ENCODE measurements at regions of chr3 and their contacts with region 1.

Region 1: DNA sequence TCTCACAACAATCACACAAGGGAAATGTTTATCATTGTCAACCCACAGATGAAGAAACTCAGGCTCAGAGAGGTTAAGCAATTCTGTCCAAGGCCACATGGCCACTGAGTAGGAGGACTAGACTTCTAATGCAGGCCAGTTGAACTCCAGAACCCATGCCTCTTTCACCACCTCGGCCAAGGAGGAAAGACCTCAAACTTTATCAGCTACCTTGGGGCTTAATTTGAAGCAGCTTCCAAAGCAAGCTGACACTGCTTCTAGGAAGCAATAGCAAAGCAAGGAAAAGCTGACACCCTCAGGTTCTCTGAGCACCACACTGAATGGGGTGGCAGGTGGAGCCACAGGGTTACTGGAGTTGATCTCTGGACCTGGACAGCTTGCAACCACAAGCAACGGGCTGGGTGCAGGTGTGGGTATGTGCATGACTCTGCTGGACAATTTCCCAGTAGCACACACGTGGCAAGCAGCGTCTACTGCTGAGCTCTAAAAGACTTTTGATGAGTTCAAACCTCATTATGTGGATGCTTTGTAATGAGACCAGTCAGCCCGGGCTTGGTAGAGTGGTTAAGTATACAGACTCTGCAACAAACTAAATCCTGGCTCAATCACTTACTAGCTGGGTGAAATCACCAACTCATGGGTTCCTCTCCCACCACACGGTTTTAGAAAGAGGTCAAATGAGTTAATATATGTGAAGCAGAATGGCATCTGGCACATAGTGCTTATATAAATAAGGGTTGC is 23.1 kb downstream of the CCNL1 start:
- DNase-seq: peak in 1 of 2 donors; percentile 20
- ATAC-seq: peak; percentile 18 to 49 (median 32)
- H3K4me3 ChIP-seq: peak overlapping the region in 1 of 10 donors; percentile 41
- H3K27ac ChIP-seq: peak overlapping the region; percentile 15 to 77 (median 58)
- H3K4me1 ChIP-seq: peaks cover 0 to 60% (median 39%) of the 10 kb centered on the region in 9 donors
- H3K27me3 ChIP-seq: no peaks in the 10 kb centered on the region
- CTCF ChIP-seq: no peak

Region 2: GRCh38 chr3:156535162-156535627 is 601.6 kb before region 1 on chr3:
- intact Hi-C with region 1: loop called in 3 of 10 experiments (anchors 5 to 10 kb)
- DNase-seq: peak; percentile 25 to 73
- ATAC-seq: peak; percentile 85 to 98 (median 94)
- H3K4me3 ChIP-seq: no peak overlapping the region
- H3K27ac ChIP-seq: peak overlapping the region; percentile 19 to 73 (median 65)
- H3K4me1 ChIP-seq: peaks cover 2 to 32% (median 17%) of the 10 kb centered on the region in 9 donors
- H3K27me3 ChIP-seq: no peaks in the 10 kb centered on the region
- CTCF ChIP-seq: peak in 7 of 9 donors; percentile 12 to 56 (median 37)

Region 3: GRCh38 chr3:156547637-156548036 is 589.2 kb before region 1 on chr3:
- intact Hi-C with region 1: loop called in 6 of 10 experiments (anchors 5 to 10 kb)
- DNase-seq: no peak
- ATAC-seq: peak in 6 of 8 donors; percentile 57 to 78 (median 65)
- H3K4me3 ChIP-seq: no peak overlapping the region
- H3K27ac ChIP-seq: peak overlapping the region in 9 of 10 donors; percentile 38 to 91 (median 59)
- H3K4me1 ChIP-seq: peaks cover 5 to 99% (median 81%) of the 10 kb centered on the region in 9 donors
- H3K27me3 ChIP-seq: no peaks in the 10 kb centered on the region
- CTCF ChIP-seq: no peak

Region 4: GRCh38 chr3:156973954-156974353 is 162.9 kb before region 1 on chr3:
- intact Hi-C with region 1: no loop called
- DNase-seq: no peak
- ATAC-seq: no peak
- H3K4me3 ChIP-seq: no peak overlapping the region
- H3K27ac ChIP-seq: no peak overlapping the region
- H3K4me1 ChIP-seq: no peaks in the 10 kb centered on the region
- H3K27me3 ChIP-seq: no peaks in the 10 kb centered on the region
- CTCF ChIP-seq: no peak

Region 5: DNA sequence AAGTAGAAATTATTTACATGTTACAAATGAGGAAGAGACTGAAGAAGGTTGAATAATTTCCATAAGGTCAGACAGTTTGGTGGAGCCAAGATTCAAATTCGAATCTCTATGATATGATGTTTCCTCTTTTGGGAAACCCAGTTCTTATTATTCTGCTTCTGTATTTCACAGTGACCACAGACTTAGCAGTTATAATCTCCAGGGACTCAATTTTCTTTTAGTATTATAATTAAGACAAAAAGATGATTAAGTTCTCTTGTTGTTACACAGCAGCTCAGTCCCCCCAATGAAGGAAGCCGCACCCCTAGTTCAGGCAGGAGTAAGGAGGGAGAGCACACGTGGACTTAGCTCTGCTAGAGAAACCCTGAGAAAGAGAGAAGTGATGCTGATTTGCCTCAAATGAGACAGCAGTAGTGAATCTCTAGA is 107.4 kb before region 1 on chr3:
- intact Hi-C with region 1: no loop called
- DNase-seq: no peak
- ATAC-seq: no peak
- H3K4me3 ChIP-seq: no peak overlapping the region
- H3K27ac ChIP-seq: no peak overlapping the region
- H3K4me1 ChIP-seq: no peaks in the 10 kb centered on the region
- H3K27me3 ChIP-seq: peaks cover 0 to 3% (median 0%) of the 10 kb centered on the region in 7 donors
- CTCF ChIP-seq: no peak

Measured in heart right ventricle (tissue), 16 donors.